Colonic mucosa (tissue), 4 donors: ENCODE measurements at regions of chr4 and their contacts with region 1.

Region 1: DNA sequence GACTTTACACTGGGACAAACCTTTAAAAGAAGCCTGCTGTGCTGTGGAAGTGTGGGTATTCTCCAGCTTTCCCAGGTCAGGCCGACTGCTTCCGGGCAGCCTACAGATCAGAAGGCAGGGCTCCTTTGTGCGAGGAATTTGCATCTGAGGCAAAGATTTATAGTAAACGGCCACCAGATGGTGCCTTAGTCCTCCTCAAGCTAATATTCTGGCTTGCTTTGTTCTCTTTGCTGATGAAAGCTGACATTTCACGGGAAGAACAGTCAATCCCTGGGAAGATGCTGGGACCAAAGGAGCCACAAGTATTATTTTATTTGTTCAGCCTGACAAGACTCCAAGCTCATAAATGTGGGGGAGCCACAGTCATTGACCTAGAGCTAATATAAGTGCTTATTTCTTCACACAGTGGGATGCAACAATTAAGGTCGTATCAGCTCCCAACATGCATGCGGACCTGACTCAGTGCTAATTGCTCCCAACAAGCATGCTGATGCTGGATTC is 120.7 kb upstream of the TRIM2 start:
- DNase-seq: peak; percentile 67
- H3K4me3 ChIP-seq: no peak overlapping the region
- H3K27ac ChIP-seq: no peak overlapping the region
- H3K4me1 ChIP-seq: no peaks in the 10 kb centered on the region
- H3K27me3 ChIP-seq: no peaks in the 10 kb centered on the region
- CTCF ChIP-seq: peak; percentile 30

Region 2: DNA sequence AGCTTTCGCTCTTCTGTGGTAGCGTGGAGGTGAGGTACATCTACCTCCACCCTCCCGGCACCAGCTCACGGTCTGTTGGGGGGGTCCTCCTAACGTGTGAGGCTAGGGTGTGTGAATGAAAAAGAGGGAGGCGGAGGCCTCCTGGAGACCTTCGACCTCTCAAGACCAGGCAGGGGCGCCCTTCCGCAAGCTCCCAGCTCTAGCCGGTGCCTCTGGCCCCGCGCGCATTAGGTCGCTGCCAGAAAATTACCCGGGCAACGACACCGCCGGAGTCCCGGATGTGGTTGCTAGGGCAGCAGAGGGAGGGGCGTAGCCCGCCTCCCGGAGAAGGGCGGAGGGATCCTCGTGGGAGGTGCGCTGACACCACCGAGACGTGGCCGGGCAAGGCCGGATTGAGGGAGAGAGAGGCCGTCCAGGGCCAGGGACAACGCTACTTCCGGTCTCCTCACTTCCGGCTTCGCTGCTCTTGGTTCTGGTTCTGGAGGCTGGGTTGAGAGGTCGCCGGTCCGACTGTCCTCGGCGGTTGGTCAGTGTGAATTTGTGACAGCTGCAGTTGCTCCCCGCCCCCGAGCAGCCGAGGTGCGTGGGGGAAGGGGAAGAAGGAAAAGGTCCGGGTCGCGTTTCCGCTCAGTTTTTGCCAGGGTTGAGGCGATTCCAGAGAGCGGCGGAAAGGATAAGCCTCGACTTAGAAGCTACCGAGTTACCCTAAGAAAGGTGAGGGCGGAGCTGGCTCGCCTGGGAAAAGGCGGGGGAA is 303.8 kb before region 1 on chr4 and contains the starts of genes ARFIP1 and TIGD4:
- intact Hi-C with region 1: loop called (anchors 5 kb)
- DNase-seq: peak; percentile 99
- H3K4me3 ChIP-seq: peak within 1 kb of the TSS; percentile 64
- H3K27ac ChIP-seq: peak within 1 kb of the TSS; percentile 92
- H3K4me1 ChIP-seq: peaks cover 7% of the 10 kb centered on the region
- H3K27me3 ChIP-seq: no peaks in the 10 kb centered on the region
- CTCF ChIP-seq: no peak
- total RNA-seq, gene ARFIP1: 55.9 to 74.1 TPM
- total RNA-seq, gene TIGD4: 0.30 TPM in 1 of 2 donors, not detected in the other

Region 3: GRCh38 chr4:152849350-152849749 is 234.1 kb before region 1 on chr4:
- intact Hi-C with region 1: loop called (anchors 5 kb)
- DNase-seq: no peak
- H3K4me3 ChIP-seq: no peak overlapping the region
- H3K27ac ChIP-seq: no peak overlapping the region
- H3K4me1 ChIP-seq: no peaks in the 10 kb centered on the region
- H3K27me3 ChIP-seq: no peaks in the 10 kb centered on the region
- CTCF ChIP-seq: no peak

Region 4: DNA sequence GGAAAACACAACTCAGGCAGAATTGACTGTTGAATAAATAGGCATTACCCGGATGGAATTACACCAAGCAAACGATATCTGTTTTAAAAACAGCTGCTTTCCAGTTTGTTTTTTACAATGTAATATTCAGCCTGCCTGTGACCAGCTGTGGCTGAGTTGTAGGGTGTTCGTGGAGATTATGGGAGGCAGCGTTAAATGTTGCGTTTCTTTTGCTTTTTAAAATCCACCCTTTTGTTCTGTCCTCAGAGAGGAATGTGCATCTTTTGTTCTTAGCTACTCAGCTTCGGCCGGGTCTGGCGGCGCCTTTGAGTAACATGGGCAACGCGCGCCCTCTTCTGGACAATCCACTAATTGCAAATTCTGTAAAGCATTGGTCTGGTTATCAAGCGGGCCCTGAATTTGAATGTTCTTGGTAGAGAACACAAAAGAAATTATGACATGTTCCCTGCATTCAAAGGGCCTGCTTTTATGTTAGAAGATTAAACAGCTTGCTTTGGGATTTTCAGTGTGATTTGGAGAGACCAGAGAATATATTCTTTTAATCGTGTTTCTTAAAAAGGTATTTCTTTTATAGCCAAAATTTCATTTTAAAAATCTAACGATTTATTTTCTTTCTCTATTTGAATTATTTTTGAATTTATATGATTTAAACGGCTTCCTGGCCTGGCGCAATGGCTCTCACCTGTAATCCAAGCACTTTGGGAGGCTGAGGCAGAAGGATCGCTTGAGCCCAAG is 44.4 kb after region 1 on chr4:
- intact Hi-C with region 1: loop called (anchors 2 kb)
- DNase-seq: peak; percentile 93
- H3K4me3 ChIP-seq: no peak overlapping the region
- H3K27ac ChIP-seq: no peak overlapping the region
- H3K4me1 ChIP-seq: no peaks in the 10 kb centered on the region
- H3K27me3 ChIP-seq: no peaks in the 10 kb centered on the region
- CTCF ChIP-seq: peak; percentile 77